ENCODE measurements at regions of chr3 and their contacts with region 1.

Region 1: DNA sequence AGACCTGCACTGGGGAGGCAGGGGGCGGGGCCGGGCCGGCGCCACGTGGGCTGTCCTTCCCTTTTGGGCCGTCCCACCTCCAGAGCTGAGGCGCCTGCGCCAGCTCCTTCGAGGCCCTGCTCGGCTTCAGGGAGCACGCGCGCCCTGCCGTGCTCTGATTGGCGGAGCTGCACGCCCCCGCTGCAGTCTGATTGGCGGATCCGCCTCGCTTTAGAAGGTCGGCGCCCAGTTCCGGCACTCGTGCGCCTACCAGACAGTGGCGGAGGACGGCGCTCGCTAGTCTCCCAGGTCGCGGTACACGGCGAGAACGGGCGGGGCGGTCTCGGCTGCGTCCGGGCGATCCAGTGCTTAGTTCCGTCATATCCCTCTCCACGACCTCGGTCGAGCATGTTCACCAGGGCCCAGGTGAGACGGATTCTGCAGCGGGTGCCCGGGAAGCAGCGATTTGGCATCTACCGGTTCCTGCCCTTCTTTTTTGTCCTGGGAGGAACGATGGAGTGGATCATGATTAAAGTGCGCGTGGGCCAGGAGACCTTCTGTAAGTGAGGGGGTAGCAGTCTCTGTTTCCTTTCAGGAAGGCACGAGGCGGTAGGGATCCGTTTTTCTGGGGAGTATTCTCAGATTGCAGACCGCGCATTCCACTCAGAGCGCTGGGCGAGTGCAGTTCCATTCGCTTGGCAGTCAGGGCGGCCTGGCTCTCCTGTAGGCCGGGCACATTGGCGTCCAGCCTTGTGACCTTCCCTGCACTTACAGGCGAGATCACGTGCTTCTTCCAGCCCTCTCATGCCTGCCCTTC is at the start of gene UQCC5:
- DNase-seq: peak; percentile 96
- ATAC-seq: peak; percentile 86
- H3K4me3 ChIP-seq: peak within 1 kb of the TSS; percentile 54 to 87 (median 62)
- H3K27ac ChIP-seq: peak within 1 kb of the TSS; percentile 87
- H3K4me1 ChIP-seq: peaks cover 60% of the 10 kb centered on the region
- H3K27me3 ChIP-seq: no peaks in the 10 kb centered on the region; a peak in 1 of 5 replicates
- CTCF ChIP-seq: peak; percentile 49
- EP300 ChIP-seq: no peak
- POLR2A ChIP-seq: peak in 1 of 2 experiments; percentile 94; a peak in 2 of 4 replicates
- RAD21 ChIP-seq: no peak
- total RNA-seq, gene UQCC5: 29.5 and 33.7 TPM in 2 replicates

Region 2: GRCh38 chr3:52471371-52472238 is 65.0 kb before region 1 on chr3:
- CTCF ChIA-PET with region 1: no interaction called
- POLR2A ChIA-PET with region 1: no interaction called
- in situ Hi-C with region 1: no loop called
- intact Hi-C with region 1: loop called (anchors 5 kb)
- DNase-seq: no peak
- ATAC-seq: peak; percentile 88
- H3K4me3 ChIP-seq: no peak overlapping the region
- H3K27ac ChIP-seq: no peak overlapping the region
- H3K4me1 ChIP-seq: peaks cover 5% of the 10 kb centered on the region; the same call in 1 of the 2 replicates
- H3K27me3 ChIP-seq: no peaks in the 10 kb centered on the region
- CTCF ChIP-seq: peak; percentile 85
- EP300 ChIP-seq: no peak
- POLR2A ChIP-seq: no peak
- RAD21 ChIP-seq: peak; percentile 72

Region 3: DNA sequence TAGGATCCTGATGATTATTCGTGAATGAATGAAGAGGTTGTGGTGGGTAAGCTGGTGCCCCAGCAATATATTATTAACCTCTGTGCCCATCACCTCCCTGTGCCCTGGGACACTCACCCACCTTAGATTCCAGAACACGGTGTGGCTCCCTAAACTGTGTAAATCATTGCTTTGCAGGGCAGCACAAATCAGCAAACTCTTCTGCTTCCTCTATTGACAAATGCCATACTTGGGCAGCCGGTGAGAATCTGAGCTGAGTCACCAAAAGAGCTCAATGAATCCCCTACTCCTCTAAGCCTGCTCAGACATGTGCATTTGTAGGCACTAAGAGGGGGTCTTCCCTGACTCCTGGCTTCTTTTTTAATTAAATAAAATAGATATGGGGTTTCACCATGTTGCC is 15.5 kb after region 1 on chr3:
- CTCF ChIA-PET with region 1: no interaction called
- POLR2A ChIA-PET with region 1: interaction called, 13 read pairs
- in situ Hi-C with region 1: no loop called
- intact Hi-C with region 1: no loop called
- DNase-seq: no peak
- ATAC-seq: no peak
- H3K4me3 ChIP-seq: no peak overlapping the region
- H3K27ac ChIP-seq: no peak overlapping the region
- H3K4me1 ChIP-seq: no peaks in the 10 kb centered on the region
- H3K27me3 ChIP-seq: no peaks in the 10 kb centered on the region
- CTCF ChIP-seq: no peak
- EP300 ChIP-seq: no peak
- POLR2A ChIP-seq: no peak
- RAD21 ChIP-seq: no peak

Region 4: GRCh38 chr3:53278667-53279066 is 742.1 kb after region 1 on chr3:
- CTCF ChIA-PET with region 1: no interaction called
- POLR2A ChIA-PET with region 1: no interaction called
- in situ Hi-C with region 1: no loop called
- intact Hi-C with region 1: no loop called
- DNase-seq: no peak
- ATAC-seq: no peak; the same call in 2 of the 3 replicates
- H3K4me3 ChIP-seq: no peak overlapping the region
- H3K27ac ChIP-seq: no peak overlapping the region
- H3K4me1 ChIP-seq: no peaks in the 10 kb centered on the region
- H3K27me3 ChIP-seq: no peaks in the 10 kb centered on the region
- CTCF ChIP-seq: no peak
- EP300 ChIP-seq: no peak
- POLR2A ChIP-seq: no peak
- RAD21 ChIP-seq: no peak